ENCODE measurements at regions of chr1 and their contacts with region 1.

Region 1: GRCh38 chr1:37883671-37884070 is 24.3 kb upstream of the MTF1 start:
- DNase-seq: no peak
- H3K4me3 ChIP-seq: no peak overlapping the region
- H3K27ac ChIP-seq: no peak overlapping the region
- H3K4me1 ChIP-seq: no peaks in the 10 kb centered on the region
- H3K27me3 ChIP-seq: no peaks in the 10 kb centered on the region
- CTCF ChIP-seq: no peak
- EP300 ChIP-seq: no peak
- POLR2A ChIP-seq: no peak

Region 2: DNA sequence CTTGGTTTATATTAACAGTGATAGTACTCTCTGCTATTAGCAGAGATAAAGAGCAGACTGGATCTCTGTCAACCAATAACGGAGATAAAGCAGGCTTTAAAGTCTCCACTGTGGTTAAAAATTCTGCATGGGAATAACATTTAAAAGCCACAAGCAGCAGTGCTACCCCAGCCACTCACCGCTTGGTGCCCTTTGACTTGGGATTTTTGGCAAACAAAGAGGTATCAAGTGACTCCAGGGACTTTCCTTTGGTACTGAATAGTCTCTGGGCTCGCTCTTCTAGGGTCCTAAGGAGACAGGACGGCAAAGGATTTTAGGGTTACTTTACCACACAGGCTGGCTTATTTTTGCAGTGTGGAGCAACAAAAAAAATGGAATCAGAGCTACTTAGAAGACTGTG is 94.9 kb after region 1 on chr1:
- intact Hi-C with region 1: loop called in 1 of 4 experiments (anchors 10 kb)
- DNase-seq: no peak
- H3K4me3 ChIP-seq: no peak overlapping the region
- H3K27ac ChIP-seq: no peak overlapping the region
- H3K4me1 ChIP-seq: no peaks in the 10 kb centered on the region
- H3K27me3 ChIP-seq: no peaks in the 10 kb centered on the region
- CTCF ChIP-seq: no peak
- EP300 ChIP-seq: no peak
- POLR2A ChIP-seq: no peak